Head of caudate nucleus (tissue), 42 donors: ENCODE measurements at regions of chr5 and their contacts with region 1.

Region 1: GRCh38 chr5:88140856-88141752 is 127.5 kb downstream of the TMEM161B start:
- DNase-seq: peak; percentile 97 to 100 (median 99)

Region 2: DNA sequence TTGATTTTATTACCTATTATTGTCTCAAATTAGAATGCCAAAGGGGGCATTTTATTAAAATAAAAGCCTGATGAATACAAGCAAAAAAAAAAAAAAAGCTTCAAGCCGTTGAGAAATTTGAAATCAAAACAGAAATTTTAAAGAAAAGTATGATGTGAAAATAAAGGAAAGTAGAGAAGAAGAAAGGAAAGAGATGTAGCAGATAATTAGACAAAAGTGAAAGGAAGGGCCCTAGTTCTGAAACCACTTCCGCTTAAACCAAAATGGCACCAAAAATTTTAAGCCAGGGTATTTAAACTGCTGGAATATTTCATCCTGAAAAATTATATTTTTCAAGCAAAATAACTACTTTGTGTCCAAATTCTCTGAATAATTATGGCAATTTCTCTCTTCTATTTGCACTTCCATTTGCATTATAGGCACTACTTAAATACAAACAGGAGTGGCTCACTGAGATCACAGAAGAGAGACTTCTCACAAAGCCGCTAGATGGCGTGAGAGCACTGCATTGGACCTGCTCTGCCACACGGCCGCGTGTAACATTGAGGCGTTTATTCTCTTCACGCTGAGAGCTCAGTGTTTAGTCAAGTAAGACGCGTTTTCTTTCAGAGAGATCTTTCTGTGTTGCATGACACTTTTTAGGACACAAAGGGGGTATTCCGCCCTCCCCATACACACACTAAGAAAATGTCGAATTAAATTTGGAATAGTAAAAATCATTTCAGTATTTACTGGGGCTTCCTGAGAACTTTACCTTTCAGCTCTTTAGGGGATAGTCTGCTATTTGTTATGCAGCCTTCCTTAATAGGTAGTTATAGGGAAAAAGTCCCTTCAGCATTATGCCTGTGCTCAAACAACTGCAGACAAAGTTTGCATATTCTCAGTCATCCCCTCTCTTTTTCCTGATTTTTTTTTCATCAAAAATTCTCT is 360.0 kb before region 1 on chr5:
- intact Hi-C with region 1: loop called (anchors 10 kb)
- DNase-seq: peak; percentile 79 to 96 (median 92)

Region 3: GRCh38 chr5:87899721-87900131 is 241.4 kb before region 1 on chr5:
- intact Hi-C with region 1: loop called (anchors 5 kb)
- DNase-seq: peak; percentile 15 to 88 (median 73)

Region 4: DNA sequence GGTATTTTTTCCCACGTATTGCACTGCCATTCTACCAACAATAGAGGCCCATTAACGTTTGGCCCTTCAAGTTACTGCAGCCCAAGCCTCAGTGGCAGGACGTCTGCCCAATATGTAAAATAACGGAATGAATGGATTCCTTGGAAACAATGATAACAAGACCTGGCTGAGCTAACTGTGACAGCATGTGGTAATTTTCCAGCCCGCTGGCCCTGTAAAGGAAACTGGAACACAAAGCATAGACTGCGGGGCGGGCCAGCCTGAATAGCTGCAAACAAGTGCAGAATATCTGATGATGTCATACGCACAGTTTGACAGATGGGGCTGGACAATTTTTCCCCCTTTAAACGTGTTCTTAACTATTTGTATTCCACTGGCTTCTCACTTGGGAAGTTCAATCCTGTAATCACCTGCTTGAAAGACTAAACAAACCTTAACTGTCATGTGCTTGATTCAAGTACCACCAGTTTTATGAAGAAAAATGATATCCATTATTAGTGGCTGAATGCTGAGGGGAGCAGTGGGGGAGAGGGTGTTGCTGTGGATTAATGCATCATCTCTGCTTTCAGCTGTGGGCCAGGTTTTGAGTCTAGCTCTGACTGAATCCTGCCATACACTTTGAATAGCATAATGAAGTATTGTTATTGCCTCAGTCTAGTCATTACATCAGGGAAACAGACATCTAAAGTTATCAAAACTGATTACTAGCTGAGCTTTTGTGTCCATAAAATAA is 196.4 kb before region 1 on chr5:
- intact Hi-C with region 1: loop called (anchors 10 kb)
- DNase-seq: peak; percentile 67 to 97 (median 88)

Region 5: GRCh38 chr5:88251048-88251711 is 110.1 kb after region 1 on chr5:
- intact Hi-C with region 1: no loop called
- DNase-seq: no peak

Region 6: GRCh38 chr5:88391116-88391515 is 250.0 kb after region 1 on chr5:
- intact Hi-C with region 1: loop called (anchors 10 kb)
- DNase-seq: peak in 35 of 42 donors; percentile 15 to 81 (median 54)